CD14-positive monocyte (primary cell): ENCODE measurements at regions of chr10 and their contacts with region 1.

Region 1: DNA sequence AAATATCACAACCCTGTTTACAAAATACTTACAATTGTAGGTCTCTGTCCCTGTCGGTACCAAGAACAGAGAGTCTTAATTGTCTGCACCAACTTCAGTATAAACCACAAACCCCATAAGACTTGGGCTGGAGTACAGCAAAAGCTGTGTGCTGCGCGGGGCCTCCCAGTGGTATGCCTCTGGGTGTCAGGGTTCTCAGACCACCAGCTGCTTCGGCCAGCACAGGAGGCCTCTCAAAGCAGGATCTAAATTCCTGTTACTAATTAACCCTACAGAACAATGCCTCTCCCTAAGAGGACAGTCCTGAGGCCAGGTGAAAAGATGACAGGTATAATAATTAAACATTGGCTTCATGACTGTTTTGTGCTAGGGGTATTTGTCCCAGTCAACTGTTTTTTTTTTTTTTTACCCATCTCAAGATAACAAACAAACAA is 957 bp upstream of the SVIL start:
- DNase-seq: no peak
- H3K4me3 ChIP-seq: peak overlapping the region in 1 of 3 experiments; percentile 35
- H3K4me3 Mint-ChIP-seq: peak overlapping the region in 1 of 2 donors; percentile 76
- H3K27ac ChIP-seq: peak overlapping the region; percentile 47 to 85
- H3K27ac Mint-ChIP-seq: peak overlapping the region; percentile 81 to 98 (median 93)
- H3K4me1 ChIP-seq: peaks cover 35 to 48% of the 10 kb centered on the region in 2 donors
- H3K4me1 Mint-ChIP-seq: peaks cover 55% of the 10 kb centered on the region
- H3K27me3 ChIP-seq: no peaks in the 10 kb centered on the region
- H3K27me3 Mint-ChIP-seq: no peaks in the 10 kb centered on the region
- CTCF ChIP-seq: no peak

Region 2: DNA sequence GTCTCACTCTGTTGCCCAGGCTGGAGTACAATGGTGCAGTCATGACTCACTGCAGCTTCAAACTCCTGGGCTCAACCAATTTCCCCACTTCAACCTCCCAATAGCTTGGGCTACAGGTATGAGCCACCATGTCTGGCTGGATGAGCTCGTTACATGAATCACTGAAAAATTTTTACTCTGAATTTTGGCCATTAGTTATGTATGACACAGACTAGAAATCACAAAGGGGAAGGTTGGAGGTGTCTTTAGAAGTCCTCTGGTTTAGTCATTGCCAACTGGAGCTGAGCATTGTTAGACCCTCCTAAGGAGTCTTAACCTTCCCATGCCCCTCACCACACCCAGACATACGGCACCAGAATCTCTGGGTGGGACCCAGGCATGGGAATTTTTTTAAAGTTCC is 35.7 kb before region 1 on chr10:
- intact Hi-C with region 1: loop called in 1 of 2 experiments (anchors 5 kb)
- DNase-seq: peak in 1 of 3 donors; percentile 32
- H3K4me3 ChIP-seq: no peak overlapping the region
- H3K4me3 Mint-ChIP-seq: no peak overlapping the region
- H3K27ac ChIP-seq: no peak overlapping the region
- H3K27ac Mint-ChIP-seq: no peak overlapping the region
- H3K4me1 ChIP-seq: peaks cover 20 to 22% of the 10 kb centered on the region in 2 donors
- H3K4me1 Mint-ChIP-seq: peaks cover 21% of the 10 kb centered on the region
- H3K27me3 ChIP-seq: no peaks in the 10 kb centered on the region
- H3K27me3 Mint-ChIP-seq: no peaks in the 10 kb centered on the region
- CTCF ChIP-seq: no peak

Region 3: GRCh38 chr10:29646238-29646902 is 10.6 kb after region 1 on chr10:
- intact Hi-C with region 1: loop called in 1 of 2 experiments (anchors 2 kb)
- DNase-seq: peak; percentile 59 to 81 (median 75)
- H3K4me3 ChIP-seq: no peak overlapping the region
- H3K4me3 Mint-ChIP-seq: peak overlapping the region; percentile 12 to 58
- H3K27ac ChIP-seq: peak overlapping the region in 1 of 2 donors; percentile 60
- H3K27ac Mint-ChIP-seq: peak overlapping the region; percentile 68 to 95 (median 82)
- H3K4me1 ChIP-seq: peaks cover 11 to 16% of the 10 kb centered on the region in 2 donors
- H3K4me1 Mint-ChIP-seq: peaks cover 40% of the 10 kb centered on the region
- H3K27me3 ChIP-seq: no peaks in the 10 kb centered on the region
- H3K27me3 Mint-ChIP-seq: peaks cover 0 to 2% (median 1%) of the 10 kb centered on the region in 3 donors
- CTCF ChIP-seq: no peak

Region 4: DNA sequence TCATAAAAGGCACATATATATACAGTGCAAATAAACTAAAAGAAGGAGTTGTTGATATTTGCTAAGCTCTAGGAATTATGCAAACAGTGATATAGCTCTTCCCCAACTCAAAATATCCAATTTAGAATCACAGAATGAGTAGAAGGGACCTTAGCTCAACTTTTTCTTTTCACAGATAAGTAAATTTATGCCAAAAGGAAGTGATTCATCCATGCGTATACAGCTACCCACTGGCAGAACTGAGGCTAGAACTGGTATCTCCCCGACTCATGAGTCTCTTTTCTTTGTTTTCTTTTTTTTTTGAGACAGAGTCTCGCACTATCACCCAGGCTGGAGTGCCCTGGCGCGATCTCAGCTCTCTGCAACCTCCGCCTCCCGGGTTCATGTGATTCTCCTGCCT is 53.3 kb after region 1 on chr10:
- intact Hi-C with region 1: loop called (anchors 10 kb)
- DNase-seq: peak; percentile 64 to 84 (median 82)
- H3K4me3 ChIP-seq: peak overlapping the region in 1 of 3 experiments; percentile 62
- H3K4me3 Mint-ChIP-seq: peak overlapping the region; percentile 34 to 39
- H3K27ac ChIP-seq: peak overlapping the region; percentile 70 to 96
- H3K27ac Mint-ChIP-seq: peak overlapping the region; percentile 92 to 99 (median 95)
- H3K4me1 ChIP-seq: peaks cover 36 to 49% of the 10 kb centered on the region in 2 donors
- H3K4me1 Mint-ChIP-seq: peaks cover 50% of the 10 kb centered on the region
- H3K27me3 ChIP-seq: no peaks in the 10 kb centered on the region
- H3K27me3 Mint-ChIP-seq: no peaks in the 10 kb centered on the region
- CTCF ChIP-seq: no peak